ENCODE measurements at regions of chr17 and their contacts with region 1.

Region 1: DNA sequence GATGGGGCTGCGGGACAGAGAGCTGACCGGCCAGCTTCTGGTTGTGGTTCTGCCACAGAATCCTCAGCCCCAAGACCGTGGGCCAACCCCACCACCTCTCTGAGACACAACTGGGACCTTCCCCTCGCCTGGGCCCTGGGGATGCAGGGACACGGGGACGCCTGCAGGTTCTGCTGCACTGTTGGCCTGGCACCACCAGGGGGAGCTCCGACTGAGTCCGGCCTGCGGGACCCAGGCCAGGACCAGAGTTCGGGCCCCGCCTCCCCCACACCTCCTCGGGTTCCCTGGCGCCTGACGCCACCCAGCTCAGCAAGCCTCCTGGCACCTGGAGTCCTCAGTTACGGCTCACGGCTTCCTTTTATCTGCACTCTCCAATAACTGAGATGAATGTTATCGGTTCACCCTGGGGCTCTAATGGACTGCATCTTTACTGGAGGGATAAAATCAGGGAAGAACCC is 27.3 kb downstream of the TBC1D16 start:
- DNase-seq: peak; percentile 83
- ATAC-seq: peak; percentile 91
- H3K4me3 Mint-ChIP-seq: no peak overlapping the region
- H3K27ac Mint-ChIP-seq: no peak overlapping the region
- H3K4me1 Mint-ChIP-seq: peaks cover 11% of the 10 kb centered on the region
- H3K27me3 Mint-ChIP-seq: no peaks in the 10 kb centered on the region

Region 2: GRCh38 chr17:79905832-79906231 is 102.6 kb before region 1 on chr17:
- CTCF ChIA-PET with region 1: no interaction called
- POLR2A ChIA-PET with region 1: no interaction called
- DNase-seq: no peak
- ATAC-seq: no peak
- H3K4me3 Mint-ChIP-seq: no peak overlapping the region
- H3K27ac Mint-ChIP-seq: no peak overlapping the region
- H3K4me1 Mint-ChIP-seq: no peaks in the 10 kb centered on the region
- H3K27me3 Mint-ChIP-seq: peaks cover 6% of the 10 kb centered on the region

Region 3: DNA sequence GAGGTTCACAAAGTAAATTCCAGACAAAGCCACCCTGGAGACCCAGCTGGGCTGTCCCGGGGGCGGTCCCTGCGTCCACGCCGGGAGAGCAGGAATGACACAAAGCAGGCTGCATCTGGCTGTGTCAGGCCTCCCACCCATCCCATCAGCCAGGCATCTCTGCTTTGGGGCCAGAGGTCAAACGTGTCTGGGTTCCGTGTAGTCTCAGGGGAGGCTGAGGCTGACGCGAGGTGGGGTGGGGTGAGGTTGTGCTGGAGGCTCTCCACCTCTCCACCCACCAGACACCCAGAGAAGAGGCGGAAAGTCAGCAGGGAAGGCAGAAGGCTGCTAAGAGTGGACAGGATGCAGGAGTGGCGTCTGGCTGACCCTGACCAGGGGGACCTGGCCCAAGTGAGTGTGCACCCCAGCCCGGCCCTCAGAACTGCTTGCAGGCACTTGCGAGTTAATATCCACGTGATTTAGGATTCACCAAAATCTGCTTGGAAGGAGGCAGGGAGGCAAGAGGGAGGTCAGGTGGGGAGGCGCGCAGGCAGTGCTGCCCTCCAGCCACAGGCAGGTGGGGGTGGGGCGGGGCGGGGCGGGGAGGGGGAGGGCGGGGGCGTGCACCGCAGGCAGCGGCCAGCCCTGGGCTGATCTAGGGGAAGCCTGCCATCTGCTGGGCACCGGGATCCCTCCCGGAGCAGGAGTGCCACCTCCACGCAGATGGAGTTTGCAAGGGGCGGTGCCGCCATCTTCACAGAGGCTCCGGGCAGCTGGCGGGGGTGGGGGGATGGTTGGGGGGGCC is 17.1 kb before region 1 on chr17:
- CTCF ChIA-PET with region 1: interaction called, 52 read pairs
- POLR2A ChIA-PET with region 1: no interaction called
- DNase-seq: peak; percentile 89
- ATAC-seq: peak; percentile 91
- H3K4me3 Mint-ChIP-seq: peak overlapping the region; percentile 70
- H3K27ac Mint-ChIP-seq: peak overlapping the region; percentile 43
- H3K4me1 Mint-ChIP-seq: peaks cover 44% of the 10 kb centered on the region
- H3K27me3 Mint-ChIP-seq: no peaks in the 10 kb centered on the region

Region 4: GRCh38 chr17:79997011-79997660 is 11.3 kb before region 1 on chr17:
- CTCF ChIA-PET with region 1: interaction called, 52 read pairs
- POLR2A ChIA-PET with region 1: no interaction called
- DNase-seq: peak; percentile 91
- ATAC-seq: peak; percentile 98
- H3K4me3 Mint-ChIP-seq: peak overlapping the region; percentile 72
- H3K27ac Mint-ChIP-seq: peak overlapping the region; percentile 99
- H3K4me1 Mint-ChIP-seq: peaks cover 59% of the 10 kb centered on the region
- H3K27me3 Mint-ChIP-seq: no peaks in the 10 kb centered on the region

Region 5: DNA sequence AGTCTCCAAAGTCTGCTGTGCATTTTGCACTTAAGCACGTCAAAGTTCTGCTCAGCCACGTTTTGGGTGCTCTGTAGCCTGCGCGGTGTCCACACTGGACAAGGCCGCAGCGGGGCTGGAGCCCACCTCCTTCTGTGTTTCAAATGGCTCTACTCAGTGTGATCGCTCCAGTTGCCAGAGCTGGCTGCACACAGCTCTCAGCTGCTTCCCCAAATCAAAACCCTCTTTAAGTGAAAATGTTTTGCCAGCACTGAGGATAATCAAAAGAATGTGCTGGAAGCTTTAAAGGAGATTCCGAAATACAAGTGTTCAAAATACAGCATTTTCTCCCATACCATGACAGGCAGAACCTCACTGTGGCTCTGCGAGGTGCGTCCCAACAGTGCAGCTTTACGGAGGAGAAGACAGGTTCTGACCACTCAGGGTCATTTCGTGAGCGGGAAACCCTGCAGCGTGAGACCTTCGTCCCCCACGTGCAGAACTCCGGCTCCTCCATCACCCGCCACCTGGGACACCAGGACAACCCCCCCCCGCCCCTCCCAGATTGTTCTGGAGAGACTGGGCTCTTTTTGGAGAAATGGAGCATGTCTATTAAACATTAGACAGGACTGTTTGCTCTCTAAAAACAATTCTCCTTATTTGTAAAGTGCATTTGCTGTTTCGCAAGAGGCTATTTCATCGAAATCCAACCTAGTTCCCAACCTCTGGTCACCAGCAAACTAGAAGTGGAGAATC is 10.7 kb after region 1 on chr17:
- CTCF ChIA-PET with region 1: interaction called, 19 read pairs
- POLR2A ChIA-PET with region 1: no interaction called
- DNase-seq: no peak
- ATAC-seq: no peak
- H3K4me3 Mint-ChIP-seq: no peak overlapping the region
- H3K27ac Mint-ChIP-seq: no peak overlapping the region
- H3K4me1 Mint-ChIP-seq: no peaks in the 10 kb centered on the region
- H3K27me3 Mint-ChIP-seq: no peaks in the 10 kb centered on the region

Region 6: GRCh38 chr17:80029258-80029974 is 21.0 kb after region 1 on chr17:
- CTCF ChIA-PET with region 1: interaction called, 20 read pairs
- POLR2A ChIA-PET with region 1: no interaction called
- DNase-seq: no peak
- ATAC-seq: no peak
- H3K4me3 Mint-ChIP-seq: no peak overlapping the region
- H3K27ac Mint-ChIP-seq: no peak overlapping the region
- H3K4me1 Mint-ChIP-seq: no peaks in the 10 kb centered on the region
- H3K27me3 Mint-ChIP-seq: peaks cover 12% of the 10 kb centered on the region

Region 7: GRCh38 chr17:80034791-80035692 is 26.6 kb after region 1 on chr17:
- CTCF ChIA-PET with region 1: interaction called, 20 read pairs
- POLR2A ChIA-PET with region 1: no interaction called
- DNase-seq: peak; percentile 67
- ATAC-seq: peak; percentile 28
- H3K4me3 Mint-ChIP-seq: peak overlapping the region; percentile 74
- H3K27ac Mint-ChIP-seq: no peak overlapping the region
- H3K4me1 Mint-ChIP-seq: peaks cover 14% of the 10 kb centered on the region
- H3K27me3 Mint-ChIP-seq: peaks cover 33% of the 10 kb centered on the region

Region 8: GRCh38 chr17:80101011-80101945 is 92.9 kb after region 1 on chr17 and contains the start of gene GAA:
- CTCF ChIA-PET with region 1: interaction called, 16 read pairs
- POLR2A ChIA-PET with region 1: no interaction called
- DNase-seq: peak; percentile 89
- ATAC-seq: peak; percentile 90
- H3K4me3 Mint-ChIP-seq: peak within 1 kb of the TSS; percentile 89
- H3K27ac Mint-ChIP-seq: peak within 1 kb of the TSS; percentile 86
- H3K4me1 Mint-ChIP-seq: peaks cover 26% of the 10 kb centered on the region
- H3K27me3 Mint-ChIP-seq: peaks cover 6% of the 10 kb centered on the region
- total RNA-seq, gene GAA: 18.1 to 22.3 TPM

Measured in activated CD8-positive, alpha-beta T cell treated with anti-CD3 and anti-CD28 coated beads, Interleukin-2, amount 10 ng/mL, durations not matched to agents 7 days and 5 days (primary cell).